HAP-1 (cell line): ENCODE measurements at regions of chr6 and their contacts with region 1.

Region 1: GRCh38 chr6:53986165-53986720 is 125.0 kb upstream of the MLIP start:
- DNase-seq: peak; percentile 69 to 76
- H3K4me3 ChIP-seq: no peak overlapping the region
- H3K4me1 ChIP-seq: peaks cover 5% of the 10 kb centered on the region
- H3K27me3 ChIP-seq: no peaks in the 10 kb centered on the region

Region 2: DNA sequence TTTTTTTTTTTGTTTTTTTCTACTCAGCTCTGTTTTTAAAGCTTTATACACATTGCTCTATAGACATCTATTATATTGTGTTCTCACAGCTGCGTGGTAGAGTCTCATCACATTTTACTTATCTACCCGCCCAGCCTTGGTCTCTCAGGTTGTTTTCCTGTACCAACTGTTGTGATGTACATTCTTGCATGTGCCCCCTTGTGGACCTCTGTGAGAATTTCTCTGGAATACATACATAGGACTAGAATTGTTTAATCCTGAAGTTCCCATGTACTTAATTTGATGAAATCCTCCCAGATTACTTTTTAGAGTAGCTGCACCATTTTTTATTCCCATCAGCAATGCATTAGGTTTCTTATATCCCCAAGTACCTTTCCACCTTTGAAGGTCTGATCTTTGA is 281.6 kb after region 1 on chr6:
- in situ Hi-C with region 1: loop called (anchors 25 kb)
- DNase-seq: peak; percentile 58 to 70
- H3K4me3 ChIP-seq: no peak overlapping the region
- H3K4me1 ChIP-seq: peaks cover 4% of the 10 kb centered on the region
- H3K27me3 ChIP-seq: no peaks in the 10 kb centered on the region

Region 3: GRCh38 chr6:55069132-55069781 is 1083.0 kb after region 1 on chr6:
- in situ Hi-C with region 1: loop called (anchors 25 kb)
- DNase-seq: peak; percentile 39 to 61
- H3K4me3 ChIP-seq: no peak overlapping the region
- H3K4me1 ChIP-seq: no peaks in the 10 kb centered on the region
- H3K27me3 ChIP-seq: no peaks in the 10 kb centered on the region

Region 4: GRCh38 chr6:55239099-55239498 is 1252.9 kb after region 1 on chr6:
- in situ Hi-C with region 1: loop called (anchors 25 kb)
- DNase-seq: no peak
- H3K4me3 ChIP-seq: no peak overlapping the region
- H3K4me1 ChIP-seq: no peaks in the 10 kb centered on the region
- H3K27me3 ChIP-seq: no peaks in the 10 kb centered on the region